Transverse colon (tissue), 4 donors: ENCODE measurements at regions of chr14 and their contacts with region 1.

Region 1: DNA sequence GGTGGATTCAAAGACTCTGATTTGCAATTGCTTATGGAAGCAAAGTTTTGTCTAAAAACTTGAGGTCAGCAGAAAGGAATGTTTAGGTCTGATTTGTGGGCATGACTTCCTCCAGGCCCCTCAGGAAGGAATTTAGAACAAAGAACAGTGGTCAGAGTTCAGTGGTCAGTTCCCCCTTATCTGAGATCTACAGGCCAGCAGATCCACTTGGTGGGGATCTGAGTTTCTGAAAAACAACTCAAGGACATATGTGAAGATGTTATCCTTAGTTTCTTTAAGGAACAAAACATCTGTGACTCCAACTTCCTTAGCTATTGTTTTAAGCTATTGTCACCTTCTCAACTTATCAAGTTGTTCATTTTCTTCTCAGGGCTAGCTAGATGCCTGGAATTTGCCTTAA is 28.0 kb upstream of the NAA30 start:
- DNase-seq: no peak
- H3K4me3 ChIP-seq: no peak overlapping the region
- H3K27ac ChIP-seq: no peak overlapping the region
- H3K4me1 ChIP-seq: no peaks in the 10 kb centered on the region
- H3K27me3 ChIP-seq: no peaks in the 10 kb centered on the region
- CTCF ChIP-seq: no peak
- EP300 ChIP-seq: no peak
- POLR2A ChIP-seq: no peak

Region 2: DNA sequence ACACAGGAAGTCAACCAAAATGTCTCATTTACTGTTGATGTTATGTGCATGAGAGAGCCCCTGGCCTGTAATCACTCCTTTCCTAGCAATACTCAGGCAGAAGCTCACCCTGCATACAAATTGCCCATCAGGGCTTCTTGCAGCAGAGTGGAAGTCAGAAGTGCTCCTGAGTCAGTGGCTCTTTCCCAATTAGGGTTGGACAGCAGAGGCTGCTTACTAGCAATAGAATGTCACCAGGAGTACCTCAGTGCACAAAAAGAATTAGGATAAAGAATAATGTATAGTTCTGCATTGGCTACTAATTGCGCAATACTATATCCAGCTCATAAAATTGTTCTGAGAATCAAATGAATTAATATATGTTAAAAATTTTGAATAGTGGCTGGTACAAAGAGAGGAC is 342.4 kb after region 1 on chr14:
- in situ Hi-C with region 1: no loop called
- intact Hi-C with region 1: loop called (anchors 5 kb)
- DNase-seq: no peak
- H3K4me3 ChIP-seq: no peak overlapping the region
- H3K27ac ChIP-seq: no peak overlapping the region
- H3K4me1 ChIP-seq: no peaks in the 10 kb centered on the region
- H3K27me3 ChIP-seq: no peaks in the 10 kb centered on the region
- CTCF ChIP-seq: no peak
- EP300 ChIP-seq: no peak
- POLR2A ChIP-seq: no peak

Region 3: DNA sequence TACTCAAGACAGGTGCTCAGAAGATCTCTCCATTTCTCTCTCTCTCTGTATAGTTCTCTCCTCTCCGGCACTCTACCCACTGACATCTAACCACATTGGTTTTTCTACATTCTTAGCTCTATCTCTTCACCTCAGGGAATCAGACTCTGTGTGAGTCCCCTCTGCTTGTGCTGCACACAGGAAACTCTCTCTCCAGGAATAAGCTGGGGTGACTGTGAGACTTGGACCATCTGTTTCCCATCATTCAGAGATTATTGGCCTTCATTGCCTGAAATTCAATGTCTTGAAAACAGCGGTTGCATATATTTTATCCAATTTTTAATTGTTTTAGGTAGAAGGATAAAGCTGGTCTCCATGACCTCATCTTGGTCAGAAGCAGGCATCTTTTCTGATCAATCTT is 398.5 kb after region 1 on chr14:
- in situ Hi-C with region 1: no loop called
- intact Hi-C with region 1: no loop called
- DNase-seq: no peak
- H3K4me3 ChIP-seq: no peak overlapping the region
- H3K27ac ChIP-seq: no peak overlapping the region
- H3K4me1 ChIP-seq: no peaks in the 10 kb centered on the region
- H3K27me3 ChIP-seq: no peaks in the 10 kb centered on the region
- CTCF ChIP-seq: no peak
- EP300 ChIP-seq: no peak
- POLR2A ChIP-seq: no peak